ENCODE measurements at regions of chr3 and their contacts with region 1.

Region 1: GRCh38 chr3:157081681-157082210 is 78.2 kb downstream of the CCNL1 start:
- DNase-seq: peak; percentile 99
- H3K4me3 ChIP-seq: no peak overlapping the region
- H3K27ac ChIP-seq: peak overlapping the region; percentile 86
- H3K4me1 ChIP-seq: peaks cover 37% of the 10 kb centered on the region
- H3K27me3 ChIP-seq: no peaks in the 10 kb centered on the region

Region 2: GRCh38 chr3:156135921-156136638 is 945.7 kb before region 1 on chr3:
- in situ Hi-C with region 1: loop called (anchors 25 kb)
- DNase-seq: no peak
- H3K4me3 ChIP-seq: no peak overlapping the region
- H3K27ac ChIP-seq: no peak overlapping the region
- H3K4me1 ChIP-seq: no peaks in the 10 kb centered on the region
- H3K27me3 ChIP-seq: peaks cover 22% of the 10 kb centered on the region

Region 3: DNA sequence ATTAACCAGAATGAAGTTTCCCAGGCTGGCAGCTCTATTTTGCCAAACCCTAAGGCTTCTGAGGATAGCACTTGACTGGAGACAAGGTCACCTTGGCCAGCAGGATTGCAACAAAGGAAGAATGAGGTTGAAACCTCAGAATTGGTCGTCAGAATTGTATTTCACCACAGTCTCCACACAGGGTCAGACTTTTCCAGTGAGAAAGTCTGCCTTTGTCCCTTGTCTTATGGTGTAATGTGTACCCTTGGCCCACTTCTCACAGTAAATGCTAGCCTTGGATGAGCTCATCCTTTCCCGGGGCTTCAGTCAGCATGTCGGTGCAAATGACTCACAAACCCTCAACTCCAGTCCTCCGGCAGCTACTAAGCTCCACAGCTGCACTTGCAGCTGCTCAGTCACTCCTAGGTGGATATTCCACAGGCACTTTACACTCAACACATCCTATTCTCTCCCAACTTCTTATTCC is 546.6 kb before region 1 on chr3:
- in situ Hi-C with region 1: loop called (anchors 25 kb)
- DNase-seq: peak; percentile 99
- H3K4me3 ChIP-seq: no peak overlapping the region
- H3K27ac ChIP-seq: peak overlapping the region; percentile 83
- H3K4me1 ChIP-seq: peaks cover 19% of the 10 kb centered on the region
- H3K27me3 ChIP-seq: no peaks in the 10 kb centered on the region

Region 4: GRCh38 chr3:156681002-156681401 is 400.7 kb before region 1 on chr3:
- in situ Hi-C with region 1: loop called (anchors 10 kb)
- DNase-seq: peak; percentile 83
- H3K4me3 ChIP-seq: peak overlapping the region; percentile 99
- H3K27ac ChIP-seq: peak overlapping the region; percentile 94
- H3K4me1 ChIP-seq: peaks cover 89% of the 10 kb centered on the region
- H3K27me3 ChIP-seq: no peaks in the 10 kb centered on the region

Measured in GM23248 (cell line).